ENCODE measurements at regions of chr5 and their contacts with region 1.

Region 1: DNA sequence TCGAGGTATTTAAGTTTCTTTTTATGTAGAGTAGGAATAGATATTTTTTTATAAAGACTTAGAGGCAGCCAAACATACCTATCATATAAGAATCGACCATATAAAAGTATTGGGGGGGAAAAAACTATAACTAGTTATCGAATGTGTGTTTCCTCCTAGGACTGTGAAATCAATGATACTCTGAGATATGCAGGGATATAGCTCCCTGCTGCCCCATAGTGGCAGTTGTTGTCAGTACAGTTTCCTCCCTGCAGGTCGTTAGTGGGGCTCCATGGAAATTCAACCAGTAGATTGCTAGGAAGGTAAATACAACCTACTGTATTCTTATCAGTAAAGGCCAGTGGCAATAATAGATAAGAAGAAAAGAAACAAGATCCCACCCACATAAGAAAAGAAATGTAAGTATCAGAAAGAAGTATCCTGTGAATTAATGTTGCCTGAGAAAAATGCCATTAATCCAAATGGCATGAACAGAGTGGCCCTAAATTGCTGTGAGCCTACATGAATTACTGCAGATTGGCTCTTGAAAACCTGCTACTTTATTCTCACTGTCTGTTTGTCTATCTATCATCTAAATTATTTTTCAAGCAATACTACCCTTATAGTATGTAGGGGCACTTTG is 136.9 kb upstream of the FBN2 start:
- H3K4me3 Mint-ChIP-seq: no peak overlapping the region
- H3K27ac Mint-ChIP-seq: no peak overlapping the region
- H3K4me1 Mint-ChIP-seq: no peaks in the 10 kb centered on the region
- H3K27me3 Mint-ChIP-seq: no peaks in the 10 kb centered on the region

Region 2: GRCh38 chr5:127564002-127564769 is 1110.8 kb before region 1 on chr5:
- intact Hi-C with region 1: loop called (anchors 10 kb)
- H3K4me3 Mint-ChIP-seq: no peak overlapping the region
- H3K27ac Mint-ChIP-seq: no peak overlapping the region
- H3K4me1 Mint-ChIP-seq: peaks cover 11% of the 10 kb centered on the region
- H3K27me3 Mint-ChIP-seq: no peaks in the 10 kb centered on the region

Region 3: DNA sequence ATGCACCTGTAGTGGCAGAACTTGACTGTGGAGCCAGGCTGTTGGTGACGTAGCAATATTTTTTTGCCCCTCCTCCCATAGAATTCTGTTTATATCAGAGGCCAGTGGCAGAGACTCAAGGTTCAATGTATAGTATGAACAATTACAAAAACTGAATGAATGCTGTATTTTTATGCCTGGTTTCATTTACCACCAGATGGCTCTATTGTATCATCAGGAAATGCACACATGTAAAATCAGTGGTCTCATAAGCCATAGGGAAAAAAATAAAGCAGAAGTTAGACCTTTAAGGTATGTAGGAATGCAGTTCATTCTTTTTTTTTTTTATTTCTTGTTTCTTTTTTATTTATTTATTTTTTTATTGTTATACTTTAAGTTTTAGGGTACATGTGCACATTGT is 928.2 kb before region 1 on chr5:
- intact Hi-C with region 1: loop called (anchors 10 kb)
- H3K4me3 Mint-ChIP-seq: no peak overlapping the region
- H3K27ac Mint-ChIP-seq: no peak overlapping the region
- H3K4me1 Mint-ChIP-seq: no peaks in the 10 kb centered on the region
- H3K27me3 Mint-ChIP-seq: no peaks in the 10 kb centered on the region

Region 4: DNA sequence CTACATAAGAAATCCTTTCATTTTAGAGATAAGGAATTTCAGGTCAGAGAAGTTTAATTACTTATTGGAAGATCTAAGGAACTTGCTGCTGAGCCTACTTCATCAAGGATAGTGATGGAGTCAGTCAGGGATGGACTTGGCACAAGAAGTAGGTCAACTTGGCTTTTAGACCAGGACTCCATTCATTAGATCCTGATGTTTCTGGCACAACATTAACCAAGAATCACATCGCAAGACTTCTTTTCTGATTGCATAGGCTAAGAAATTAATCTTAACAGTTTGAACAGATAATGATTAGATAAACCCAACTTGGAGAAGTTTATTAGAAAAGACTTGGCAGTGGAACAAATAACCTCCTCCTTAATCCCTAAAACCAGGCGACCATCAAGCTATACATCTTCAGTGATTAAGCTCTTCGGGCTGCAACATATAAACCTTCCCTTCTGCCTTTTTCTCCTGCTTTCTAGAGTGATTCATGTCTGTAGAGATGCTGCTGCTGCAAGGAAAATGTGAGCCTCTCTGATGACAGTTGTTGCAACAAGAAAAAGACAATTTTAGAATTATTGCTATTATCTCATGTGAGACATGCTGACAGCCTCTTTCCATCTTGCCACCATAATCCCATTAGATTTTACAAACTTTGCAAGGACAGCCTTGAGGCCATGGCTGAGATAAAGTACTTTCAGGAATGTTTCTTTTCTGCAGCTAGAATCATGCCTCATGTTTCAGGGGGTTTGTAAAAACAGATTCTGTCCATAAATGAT is 82.4 kb after region 1 on chr5:
- intact Hi-C with region 1: no loop called
- H3K4me3 Mint-ChIP-seq: no peak overlapping the region
- H3K27ac Mint-ChIP-seq: no peak overlapping the region
- H3K4me1 Mint-ChIP-seq: no peaks in the 10 kb centered on the region
- H3K27me3 Mint-ChIP-seq: no peaks in the 10 kb centered on the region